Activated CD4-positive, alpha-beta memory T cell treated with anti-CD3 and anti-CD28 coated beads, Interleukin-2, amount 10 ng/mL, durations not matched to agents 7 days and 5 days (primary cell): ENCODE measurements at regions of chr6 and their contacts with region 1.

Region 1: GRCh38 chr6:85593438-85594196 is at the start of gene SNX14:
- DNase-seq: peak; percentile 81
- H3K4me3 Mint-ChIP-seq: peak within 1 kb of the TSS; percentile 84
- H3K27ac Mint-ChIP-seq: peak within 1 kb of the TSS; percentile 90
- H3K4me1 Mint-ChIP-seq: peaks cover 28% of the 10 kb centered on the region
- H3K27me3 Mint-ChIP-seq: no peaks in the 10 kb centered on the region
- total RNA-seq, gene SNX14: 48.2 to 50.9 TPM

Region 2: GRCh38 chr6:85004361-85004995 is 589.1 kb before region 1 on chr6:
- CTCF ChIA-PET with region 1: no interaction called
- POLR2A ChIA-PET with region 1: no interaction called
- DNase-seq: no peak
- H3K4me3 Mint-ChIP-seq: no peak overlapping the region
- H3K27ac Mint-ChIP-seq: no peak overlapping the region
- H3K4me1 Mint-ChIP-seq: no peaks in the 10 kb centered on the region
- H3K27me3 Mint-ChIP-seq: no peaks in the 10 kb centered on the region

Region 3: GRCh38 chr6:85344996-85345395 is 248.6 kb before region 1 on chr6:
- CTCF ChIA-PET with region 1: no interaction called
- POLR2A ChIA-PET with region 1: no interaction called
- DNase-seq: no peak
- H3K4me3 Mint-ChIP-seq: no peak overlapping the region
- H3K27ac Mint-ChIP-seq: no peak overlapping the region
- H3K4me1 Mint-ChIP-seq: no peaks in the 10 kb centered on the region
- H3K27me3 Mint-ChIP-seq: peaks cover 8% of the 10 kb centered on the region

Region 4: GRCh38 chr6:85449818-85450759 is 143.5 kb before region 1 on chr6 and contains the start of gene NT5E:
- CTCF ChIA-PET with region 1: no interaction called
- POLR2A ChIA-PET with region 1: interaction called, 13 read pairs
- DNase-seq: peak; percentile 55
- H3K4me3 Mint-ChIP-seq: peak within 1 kb of the TSS; percentile 76
- H3K27ac Mint-ChIP-seq: peak within 1 kb of the TSS; percentile 31
- H3K4me1 Mint-ChIP-seq: peaks cover 26% of the 10 kb centered on the region
- H3K27me3 Mint-ChIP-seq: peaks cover 60% of the 10 kb centered on the region
- total RNA-seq, gene NT5E: 2.4 to 3.4 TPM

Region 5: GRCh38 chr6:85561750-85562357 is 31.8 kb before region 1 on chr6:
- CTCF ChIA-PET with region 1: no interaction called
- POLR2A ChIA-PET with region 1: no interaction called
- DNase-seq: no peak
- H3K4me3 Mint-ChIP-seq: no peak overlapping the region
- H3K27ac Mint-ChIP-seq: no peak overlapping the region
- H3K4me1 Mint-ChIP-seq: peaks cover 5% of the 10 kb centered on the region
- H3K27me3 Mint-ChIP-seq: no peaks in the 10 kb centered on the region

Region 6: DNA sequence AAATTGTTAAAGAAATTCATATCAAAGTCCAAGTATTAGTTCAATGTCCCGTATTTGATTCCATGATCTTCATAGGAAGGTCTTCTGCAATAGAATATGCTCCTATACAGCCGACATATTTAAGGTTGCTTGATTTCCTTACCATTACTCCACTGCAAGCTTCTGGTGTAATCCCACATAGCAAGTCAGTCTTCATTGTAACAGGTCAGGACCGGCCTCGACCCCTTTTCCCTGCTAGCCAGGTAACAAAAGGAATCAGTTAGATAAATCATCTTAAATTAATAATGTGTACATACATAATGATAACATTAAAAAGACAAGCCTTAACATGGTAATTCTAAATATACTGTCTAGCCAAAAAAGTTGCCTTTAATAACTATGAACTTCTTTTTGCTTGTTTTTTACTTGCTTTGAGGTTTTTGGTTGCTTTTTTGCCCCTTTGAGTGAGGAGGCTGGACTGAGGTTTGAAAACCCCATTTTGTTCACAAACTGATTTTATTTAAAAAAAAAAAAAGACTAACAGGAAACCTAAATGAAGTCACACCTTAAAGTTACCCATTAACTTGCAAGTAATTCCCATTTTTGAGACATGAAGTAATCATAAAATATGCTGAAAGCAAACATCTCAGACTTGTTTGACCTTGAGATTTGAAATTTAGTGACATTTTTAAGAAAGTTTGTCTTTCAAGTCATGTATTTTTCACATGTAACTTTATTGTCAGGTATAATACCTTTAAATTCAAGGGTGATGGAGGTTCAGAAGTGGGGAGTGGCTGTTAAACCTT is 19.3 kb after region 1 on chr6:
- CTCF ChIA-PET with region 1: no interaction called
- POLR2A ChIA-PET with region 1: interaction called, 14 read pairs
- DNase-seq: no peak
- H3K4me3 Mint-ChIP-seq: no peak overlapping the region
- H3K27ac Mint-ChIP-seq: no peak overlapping the region
- H3K4me1 Mint-ChIP-seq: peaks cover 12% of the 10 kb centered on the region
- H3K27me3 Mint-ChIP-seq: no peaks in the 10 kb centered on the region

Region 7: DNA sequence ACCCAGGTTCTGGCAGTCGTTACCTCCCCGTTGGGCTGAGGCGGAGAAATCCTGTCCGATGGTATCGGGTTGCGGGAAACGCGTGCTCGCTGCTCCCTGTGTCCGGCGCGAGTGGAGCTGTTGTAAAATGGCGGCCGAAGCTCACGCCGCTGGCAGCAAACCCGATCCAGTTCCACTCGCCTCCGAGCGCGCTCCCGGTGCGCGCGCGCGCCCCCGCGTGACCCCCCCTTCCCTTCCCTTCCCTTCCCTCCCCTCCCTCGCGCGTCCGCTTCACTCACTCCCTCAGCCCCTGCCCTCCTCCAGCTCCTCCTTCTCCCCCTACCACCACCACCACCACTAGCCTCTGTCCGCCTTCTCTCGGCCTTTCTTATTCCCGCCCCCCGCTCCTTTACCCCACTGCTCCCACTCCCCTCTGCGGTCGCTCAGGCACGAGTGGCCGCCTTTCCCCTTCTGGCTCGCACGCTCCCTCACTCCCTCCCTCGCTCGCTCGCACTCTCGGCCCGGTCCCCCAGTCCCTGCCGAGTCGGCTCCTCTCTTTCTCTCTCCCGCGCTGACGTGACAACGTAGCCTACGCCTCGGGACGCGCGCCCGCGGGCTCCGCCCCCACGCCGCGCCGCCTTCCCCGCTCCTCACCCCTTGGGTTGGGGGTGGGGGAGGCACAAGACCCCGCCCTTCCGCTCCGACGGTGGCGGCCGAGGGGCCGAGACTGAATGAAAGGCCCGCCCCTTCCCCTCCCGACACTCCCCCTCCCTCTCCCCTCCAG is 49.3 kb after region 1 on chr6 and contains the start of gene SYNCRIP:
- CTCF ChIA-PET with region 1: no interaction called
- POLR2A ChIA-PET with region 1: interaction called, 97 read pairs
- DNase-seq: peak; percentile 99
- H3K4me3 Mint-ChIP-seq: peak within 1 kb of the TSS; percentile 92
- H3K27ac Mint-ChIP-seq: peak within 1 kb of the TSS; percentile 99
- H3K4me1 Mint-ChIP-seq: peaks cover 48% of the 10 kb centered on the region
- H3K27me3 Mint-ChIP-seq: peaks cover 1% of the 10 kb centered on the region
- total RNA-seq, gene SYNCRIP: 100.0 to 101 TPM

Region 8: GRCh38 chr6:85669735-85670194 is 76.1 kb after region 1 on chr6:
- CTCF ChIA-PET with region 1: interaction called, 5 read pairs
- POLR2A ChIA-PET with region 1: interaction called, 141 read pairs
- DNase-seq: peak; percentile 62
- H3K4me3 Mint-ChIP-seq: peak overlapping the region; percentile 68
- H3K27ac Mint-ChIP-seq: peak overlapping the region; percentile 96
- H3K4me1 Mint-ChIP-seq: peaks cover 64% of the 10 kb centered on the region
- H3K27me3 Mint-ChIP-seq: no peaks in the 10 kb centered on the region

Region 9: GRCh38 chr6:85775887-85776286 is 182.3 kb after region 1 on chr6:
- CTCF ChIA-PET with region 1: no interaction called
- POLR2A ChIA-PET with region 1: no interaction called
- DNase-seq: no peak
- H3K4me3 Mint-ChIP-seq: no peak overlapping the region
- H3K27ac Mint-ChIP-seq: no peak overlapping the region
- H3K4me1 Mint-ChIP-seq: no peaks in the 10 kb centered on the region
- H3K27me3 Mint-ChIP-seq: peaks cover 6% of the 10 kb centered on the region